Activated CD4-positive, alpha-beta T cell treated with anti-CD3 and anti-CD28 coated beads for 36 hours (primary cell): ENCODE measurements at regions of chrX and their contacts with region 1.

Region 1: GRCh38 chrX:49002091-49002935 is at the start of gene GRIPAP1:
- DNase-seq: peak; percentile 87
- ATAC-seq: peak; percentile 82
- H3K4me3 Mint-ChIP-seq: peak within 1 kb of the TSS; percentile 97
- H3K27ac Mint-ChIP-seq: peak within 1 kb of the TSS; percentile 98
- H3K4me1 Mint-ChIP-seq: peaks cover 34% of the 10 kb centered on the region
- H3K27me3 Mint-ChIP-seq: no peaks in the 10 kb centered on the region
- total RNA-seq, gene GRIPAP1: 57.8 to 63.3 TPM

Region 2: DNA sequence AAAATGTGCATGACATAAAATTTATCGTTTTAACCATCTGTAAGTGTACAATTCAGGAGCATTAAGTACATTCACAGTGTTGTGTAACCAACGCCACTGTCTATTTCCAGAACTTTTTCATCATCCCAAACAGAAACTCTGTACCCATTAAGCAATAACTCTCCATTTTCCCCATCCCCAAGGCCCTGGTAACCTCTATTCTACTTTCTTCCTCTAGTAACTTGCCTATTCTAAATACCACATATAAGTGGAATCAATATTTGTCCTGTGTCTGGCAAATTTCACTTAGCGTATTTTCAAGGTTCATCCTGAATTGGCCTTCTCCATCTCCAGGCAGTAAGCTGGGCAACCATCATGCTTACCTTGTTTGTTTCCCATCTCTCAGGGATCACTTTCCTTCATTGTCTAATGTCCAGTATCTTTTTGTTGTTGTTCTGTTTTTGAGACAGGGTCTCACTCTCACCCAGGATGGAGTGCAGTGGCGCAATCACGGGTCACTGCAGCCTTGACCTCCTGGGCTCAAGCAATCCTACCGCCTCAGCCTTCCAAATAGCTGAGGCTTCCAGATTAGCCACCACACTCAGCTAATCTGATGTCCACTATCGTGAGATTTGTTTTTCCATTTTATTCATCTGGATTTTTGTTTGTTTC is 17.4 kb after region 1 on chrX:
- CTCF ChIA-PET with region 1: no interaction called
- POLR2A ChIA-PET with region 1: no interaction called
- intact Hi-C with region 1: no loop called
- DNase-seq: no peak
- ATAC-seq: no peak
- H3K4me3 Mint-ChIP-seq: no peak overlapping the region
- H3K27ac Mint-ChIP-seq: no peak overlapping the region
- H3K4me1 Mint-ChIP-seq: peaks cover 3% of the 10 kb centered on the region
- H3K27me3 Mint-ChIP-seq: no peaks in the 10 kb centered on the region

Region 3: DNA sequence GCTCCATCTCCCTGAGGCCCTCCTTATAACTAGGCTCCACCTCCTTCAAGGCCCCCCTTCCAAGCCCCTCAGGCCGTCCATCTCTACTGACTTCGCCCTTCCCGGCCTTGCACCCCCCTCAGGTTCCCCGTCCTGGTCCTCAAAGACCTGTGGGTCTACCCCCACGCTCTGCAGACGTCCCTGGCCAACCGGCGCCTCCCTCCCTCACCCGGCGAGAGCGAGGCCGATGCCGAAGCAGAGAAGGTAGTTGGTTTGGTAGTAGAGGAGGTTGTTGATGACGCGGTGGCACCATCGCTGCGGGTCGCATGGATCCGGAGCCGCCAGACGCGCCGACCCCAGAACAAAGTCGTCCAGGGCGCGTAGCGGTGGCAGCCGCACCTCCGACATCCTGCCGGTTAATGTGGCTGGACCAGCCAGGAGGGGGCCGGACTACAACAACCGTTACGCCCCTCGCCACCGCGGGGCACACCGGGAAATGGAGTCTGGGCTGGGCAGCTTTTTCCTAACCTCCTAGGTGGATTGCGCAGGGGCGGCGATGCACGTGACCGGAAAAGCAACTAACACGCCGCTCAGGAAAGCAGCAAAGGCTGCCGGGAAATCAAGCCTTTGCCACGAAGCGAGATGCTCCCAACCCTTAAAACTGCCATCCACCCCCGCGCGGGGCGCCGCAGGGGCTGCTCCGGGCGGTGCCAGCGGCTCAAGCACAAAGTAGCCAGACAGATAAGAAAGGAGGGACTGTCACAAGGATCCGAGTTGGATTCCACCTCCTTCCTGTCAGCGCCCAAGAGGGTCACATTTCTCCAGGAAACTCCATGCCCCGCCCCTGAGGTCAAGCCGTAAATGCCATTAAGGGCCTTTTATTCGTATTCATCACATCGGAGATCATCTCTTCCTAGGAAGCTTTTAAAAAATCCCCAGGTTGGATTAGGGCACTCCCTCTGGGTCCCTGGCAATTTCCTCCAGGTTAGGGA is 71.6 kb after region 1 on chrX and contains the start of gene PRAF2:
- CTCF ChIA-PET with region 1: no interaction called
- POLR2A ChIA-PET with region 1: no interaction called
- intact Hi-C with region 1: loop called in 1 of 2 experiments (anchors 1 kb)
- DNase-seq: peak; percentile 94
- ATAC-seq: peak; percentile 98
- H3K4me3 Mint-ChIP-seq: peak within 1 kb of the TSS; percentile 78
- H3K27ac Mint-ChIP-seq: peak within 1 kb of the TSS; percentile 73
- H3K4me1 Mint-ChIP-seq: peaks cover 19% of the 10 kb centered on the region
- H3K27me3 Mint-ChIP-seq: no peaks in the 10 kb centered on the region
- total RNA-seq, gene PRAF2: 9.1 to 11.5 TPM

Region 4: GRCh38 chrX:49106930-49107329 is 104.6 kb after region 1 on chrX:
- CTCF ChIA-PET with region 1: no interaction called
- POLR2A ChIA-PET with region 1: no interaction called
- intact Hi-C with region 1: no loop called
- DNase-seq: peak; percentile 13
- ATAC-seq: peak; percentile 66
- H3K4me3 Mint-ChIP-seq: no peak overlapping the region
- H3K27ac Mint-ChIP-seq: no peak overlapping the region
- H3K4me1 Mint-ChIP-seq: peaks cover under 1% of the 10 kb centered on the region
- H3K27me3 Mint-ChIP-seq: no peaks in the 10 kb centered on the region

Region 5: DNA sequence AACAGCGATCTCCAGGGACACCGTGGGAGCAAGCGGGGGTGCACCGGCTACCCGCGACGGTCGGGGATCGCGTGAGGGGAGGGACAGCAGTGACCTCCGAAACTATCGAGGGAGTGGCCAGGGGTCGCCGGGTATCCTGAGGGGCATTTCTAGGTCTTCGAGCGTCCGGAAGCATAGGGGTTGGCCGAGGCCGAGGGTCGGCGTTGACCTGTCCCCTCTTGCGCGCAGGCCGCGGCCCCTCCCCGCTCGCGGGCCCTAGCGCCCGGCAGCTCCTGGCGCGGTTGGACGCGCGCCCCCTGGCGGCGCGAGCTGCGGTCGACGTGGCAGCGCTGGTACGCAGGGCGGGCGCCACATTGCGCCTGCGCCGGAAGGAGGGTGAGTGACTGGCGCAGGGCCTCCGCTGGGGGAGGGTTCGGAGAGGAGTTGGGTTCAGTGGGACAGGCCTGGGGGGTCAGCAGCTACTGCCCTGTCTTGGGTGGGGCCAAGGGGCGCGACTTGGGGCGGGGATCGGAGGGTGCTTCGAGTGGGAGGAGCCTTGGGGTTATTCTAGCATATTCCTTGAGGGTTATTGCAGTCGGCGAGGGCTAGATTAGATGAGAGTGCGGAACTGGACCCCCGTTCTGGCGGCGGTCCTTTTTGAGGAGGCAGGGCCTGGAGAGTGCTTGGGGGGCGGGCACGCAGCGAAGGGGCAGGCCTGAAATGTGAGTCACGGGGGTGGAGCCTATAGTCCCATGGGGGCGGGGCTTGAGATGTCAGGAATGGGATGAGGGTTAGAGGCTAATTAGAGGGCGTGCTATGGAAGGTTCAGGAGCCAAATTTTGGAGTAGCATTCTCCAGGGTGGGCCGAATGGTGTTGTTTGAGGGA is 161.5 kb after region 1 on chrX:
- CTCF ChIA-PET with region 1: interaction called, 4 read pairs
- POLR2A ChIA-PET with region 1: no interaction called
- intact Hi-C with region 1: loop called in 1 of 2 experiments (anchors 2 kb)
- DNase-seq: peak; percentile 88
- ATAC-seq: peak; percentile 60
- H3K4me3 Mint-ChIP-seq: peak overlapping the region; percentile 77
- H3K27ac Mint-ChIP-seq: peak overlapping the region; percentile 96
- H3K4me1 Mint-ChIP-seq: peaks cover 27% of the 10 kb centered on the region
- H3K27me3 Mint-ChIP-seq: no peaks in the 10 kb centered on the region